Activated CD4-positive, alpha-beta T cell treated with anti-CD3 and anti-CD28 coated beads, Interleukin-2, amount 10 ng/mL, durations not matched to agents 24 days and 14 days (primary cell): ENCODE measurements at regions of chr11 and their contacts with region 1.

Region 1: DNA sequence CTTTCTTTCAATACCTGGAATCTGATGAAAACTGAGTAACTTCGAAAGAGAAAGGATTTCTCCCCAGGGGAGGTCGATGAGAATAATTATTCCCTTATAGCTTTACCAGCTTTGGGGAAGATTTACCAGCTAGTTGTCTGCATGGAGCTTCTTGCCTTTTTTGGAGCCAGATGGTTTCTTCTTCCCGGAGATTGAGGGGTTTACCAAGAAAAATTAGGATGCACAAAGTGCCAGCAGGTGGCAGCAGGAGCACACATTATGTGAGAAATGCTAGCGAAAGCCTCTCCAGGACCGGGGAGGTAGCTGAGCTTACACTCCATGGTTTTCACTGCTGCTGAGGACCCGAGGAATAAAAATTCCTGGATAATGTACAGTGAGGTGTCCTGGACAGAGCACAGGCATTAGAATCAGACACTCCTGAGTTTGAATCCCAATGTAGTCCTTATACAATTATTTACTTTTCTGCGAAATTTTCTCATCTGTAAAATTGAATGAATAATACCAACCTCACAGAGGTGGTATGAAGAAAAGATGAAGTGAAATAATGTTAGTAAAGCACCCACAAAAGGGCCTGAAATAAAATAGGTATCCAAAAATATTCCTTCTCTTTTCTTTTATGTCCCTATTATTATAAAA is 46.0 kb upstream of the PARVA start:
- DNase-seq: peak; percentile 91
- H3K4me3 Mint-ChIP-seq: no peak overlapping the region
- H3K27ac Mint-ChIP-seq: no peak overlapping the region
- H3K4me1 Mint-ChIP-seq: peaks cover 3% of the 10 kb centered on the region
- H3K27me3 Mint-ChIP-seq: no peaks in the 10 kb centered on the region

Region 2: GRCh38 chr11:12599408-12600143 is 268.2 kb after region 1 on chr11:
- intact Hi-C with region 1: loop called (anchors 5 kb)
- DNase-seq: peak; percentile 84
- H3K4me3 Mint-ChIP-seq: no peak overlapping the region
- H3K27ac Mint-ChIP-seq: no peak overlapping the region
- H3K4me1 Mint-ChIP-seq: peaks cover 2% of the 10 kb centered on the region
- H3K27me3 Mint-ChIP-seq: peaks cover 15% of the 10 kb centered on the region

Region 3: DNA sequence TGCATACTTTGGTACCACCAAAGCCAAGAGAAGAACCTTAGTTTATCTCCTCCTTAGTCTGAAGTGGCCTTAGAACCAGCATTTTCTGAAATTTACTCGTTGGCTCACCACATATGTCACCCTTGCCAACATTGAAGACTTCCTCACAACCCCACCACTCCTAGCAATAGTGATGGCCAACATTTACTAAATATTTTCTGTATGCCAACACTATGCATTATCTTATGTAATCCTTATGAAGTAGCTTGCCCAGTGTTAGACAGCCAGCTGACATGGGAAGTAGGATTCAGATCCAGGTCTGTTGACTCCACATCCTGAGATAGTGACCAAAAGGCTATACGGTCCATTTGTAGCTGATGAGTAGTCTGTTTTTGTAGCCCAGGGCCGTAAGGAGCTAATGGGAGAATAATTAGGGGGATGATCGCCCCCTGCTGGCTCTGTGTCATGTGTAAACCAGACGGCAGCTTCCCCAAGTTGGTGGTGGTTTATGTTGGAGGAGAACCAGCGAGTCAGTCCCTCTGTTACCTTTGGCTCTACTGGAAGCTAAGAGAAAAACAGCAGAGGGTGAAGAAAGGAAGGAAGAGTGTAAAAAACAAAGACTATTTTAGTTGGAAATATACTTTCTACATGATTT is 557.3 kb after region 1 on chr11:
- intact Hi-C with region 1: loop called (anchors 1 kb)
- DNase-seq: peak; percentile 88
- H3K4me3 Mint-ChIP-seq: no peak overlapping the region
- H3K27ac Mint-ChIP-seq: no peak overlapping the region
- H3K4me1 Mint-ChIP-seq: no peaks in the 10 kb centered on the region
- H3K27me3 Mint-ChIP-seq: peaks cover 5% of the 10 kb centered on the region

Region 4: DNA sequence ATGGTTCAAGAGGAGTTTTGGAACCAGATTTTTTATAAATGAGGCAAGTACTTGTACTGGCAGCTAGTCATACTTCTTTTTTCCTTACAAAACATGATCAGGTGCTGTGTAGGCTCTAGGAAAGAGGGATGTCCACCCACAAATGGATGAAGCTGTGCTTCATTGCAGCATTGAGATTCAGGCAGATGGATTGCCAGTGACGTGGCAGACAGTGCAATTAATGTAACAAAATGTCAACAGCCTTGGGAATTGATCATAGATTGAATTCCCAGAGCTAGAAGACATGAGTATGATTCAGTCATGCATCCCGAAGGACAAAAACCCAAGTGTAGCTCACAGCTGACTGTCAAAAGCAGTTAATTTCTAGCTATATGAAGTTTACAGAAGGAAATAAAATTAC is 578.5 kb after region 1 on chr11:
- intact Hi-C with region 1: no loop called
- DNase-seq: no peak
- H3K4me3 Mint-ChIP-seq: no peak overlapping the region
- H3K27ac Mint-ChIP-seq: no peak overlapping the region
- H3K4me1 Mint-ChIP-seq: no peaks in the 10 kb centered on the region
- H3K27me3 Mint-ChIP-seq: peaks cover 13% of the 10 kb centered on the region